Mammary epithelial cell (primary cell): ENCODE measurements at regions of chr3 and their contacts with region 1.

Region 1: GRCh38 chr3:56484122-56484521 is 15.9 kb upstream of the ERC2 start:
- DNase-seq: no peak
- H3K4me3 ChIP-seq: no peak overlapping the region
- H3K27ac ChIP-seq: no peak overlapping the region
- H3K4me1 ChIP-seq: no peaks in the 10 kb centered on the region
- H3K27me3 ChIP-seq: no peaks in the 10 kb centered on the region
- CTCF ChIP-seq: no peak

Region 2: DNA sequence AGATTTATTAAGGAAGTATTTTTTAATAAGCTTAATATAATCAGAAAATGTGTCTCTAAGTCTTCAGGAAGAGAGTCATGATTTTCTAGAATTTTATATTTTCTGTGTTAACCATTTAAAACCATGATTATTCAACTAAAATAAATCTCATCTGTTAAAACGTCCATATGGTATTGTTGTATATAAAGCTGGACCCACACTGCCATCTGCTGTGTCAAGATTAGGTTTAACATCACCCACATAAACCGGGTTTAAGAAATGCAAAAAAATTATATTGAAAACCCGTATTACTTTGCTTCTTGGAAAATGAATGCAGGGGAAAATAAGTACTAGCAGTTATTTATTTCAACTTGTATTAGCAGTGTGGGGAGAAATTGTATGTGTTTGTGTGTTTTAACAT is 63.4 kb after region 1 on chr3:
- CTCF ChIA-PET with region 1: no interaction called
- dilution Hi-C with region 1: loop called (anchors 10 kb)
- in situ Hi-C with region 1: no loop called
- intact Hi-C with region 1: no loop called
- DNase-seq: no peak
- H3K4me3 ChIP-seq: no peak overlapping the region
- H3K27ac ChIP-seq: no peak overlapping the region
- H3K4me1 ChIP-seq: no peaks in the 10 kb centered on the region
- H3K27me3 ChIP-seq: no peaks in the 10 kb centered on the region
- CTCF ChIP-seq: peak; percentile 1 to 33